ENCODE measurements at regions of chr1 and their contacts with region 1.

Region 1: GRCh38 chr1:208413961-208414360 is 169.8 kb upstream of the PLXNA2 start:
- DNase-seq: no peak
- H3K4me3 ChIP-seq: no peak overlapping the region
- H3K27ac ChIP-seq: no peak overlapping the region
- H3K4me1 ChIP-seq: no peaks in the 10 kb centered on the region
- H3K27me3 ChIP-seq: no peaks in the 10 kb centered on the region
- CTCF ChIP-seq: no peak
- POLR2A ChIP-seq: no peak

Region 2: GRCh38 chr1:207040181-207040533 is 1373.8 kb before region 1 on chr1:
- CTCF ChIA-PET with region 1: no interaction called
- POLR2A ChIA-PET with region 1: interaction called, 11 read pairs
- dilution Hi-C with region 1: no loop called
- intact Hi-C with region 1: no loop called
- DNase-seq: no peak
- H3K4me3 ChIP-seq: no peak overlapping the region
- H3K27ac ChIP-seq: no peak overlapping the region
- H3K4me1 ChIP-seq: no peaks in the 10 kb centered on the region
- H3K27me3 ChIP-seq: peaks cover 7 to 24% of the 10 kb centered on the region in 2 experiments
- CTCF ChIP-seq: no peak
- POLR2A ChIP-seq: no peak

Region 3: GRCh38 chr1:208357644-208358507 is 56.1 kb before region 1 on chr1:
- CTCF ChIA-PET with region 1: no interaction called
- POLR2A ChIA-PET with region 1: no interaction called
- dilution Hi-C with region 1: no loop called
- intact Hi-C with region 1: no loop called
- DNase-seq: no peak
- H3K4me3 ChIP-seq: no peak overlapping the region
- H3K27ac ChIP-seq: no peak overlapping the region
- H3K4me1 ChIP-seq: no peaks in the 10 kb centered on the region
- H3K27me3 ChIP-seq: no peaks in the 10 kb centered on the region
- CTCF ChIP-seq: no peak
- POLR2A ChIP-seq: no peak

Region 4: GRCh38 chr1:208397286-208397685 is 16.7 kb before region 1 on chr1:
- CTCF ChIA-PET with region 1: no interaction called
- POLR2A ChIA-PET with region 1: no interaction called
- dilution Hi-C with region 1: no loop called
- intact Hi-C with region 1: no loop called
- DNase-seq: no peak
- H3K4me3 ChIP-seq: no peak overlapping the region
- H3K27ac ChIP-seq: no peak overlapping the region
- H3K4me1 ChIP-seq: no peaks in the 10 kb centered on the region
- H3K27me3 ChIP-seq: no peaks in the 10 kb centered on the region
- CTCF ChIP-seq: no peak
- POLR2A ChIP-seq: no peak

Measured in endothelial cell of umbilical vein (primary cell).